PC-3 (cell line): ENCODE measurements at regions of chr5 and their contacts with region 1.

Region 1: GRCh38 chr5:129904102-129904666 is at the start of gene CHSY3:
- DNase-seq: peak; percentile 54
- ATAC-seq: peak; percentile 84
- H3K4me3 ChIP-seq: peak within 1 kb of the TSS; percentile 69
- H3K27ac ChIP-seq: no peak within 1 kb of the TSS
- H3K4me1 ChIP-seq: no peaks in the 10 kb centered on the region
- H3K27me3 ChIP-seq: peaks cover 13% of the 10 kb centered on the region
- CTCF ChIP-seq: no peak
- total RNA-seq, gene CHSY3: 1.7 and 1.8 TPM in 2 replicates

Region 2: GRCh38 chr5:129963359-129963758 is 59.2 kb after region 1 on chr5:
- CTCF ChIA-PET with region 1: interaction called, 3 read pairs
- POLR2A ChIA-PET with region 1: no interaction called
- intact Hi-C with region 1: loop called (anchors 10 kb)
- DNase-seq: peak; percentile 60
- ATAC-seq: peak; percentile 94
- H3K4me3 ChIP-seq: no peak overlapping the region
- H3K27ac ChIP-seq: peak overlapping the region; percentile 66
- H3K4me1 ChIP-seq: peaks cover 9% of the 10 kb centered on the region; the same call in 1 of the 2 replicates
- H3K27me3 ChIP-seq: no peaks in the 10 kb centered on the region
- CTCF ChIP-seq: no peak

Region 3: DNA sequence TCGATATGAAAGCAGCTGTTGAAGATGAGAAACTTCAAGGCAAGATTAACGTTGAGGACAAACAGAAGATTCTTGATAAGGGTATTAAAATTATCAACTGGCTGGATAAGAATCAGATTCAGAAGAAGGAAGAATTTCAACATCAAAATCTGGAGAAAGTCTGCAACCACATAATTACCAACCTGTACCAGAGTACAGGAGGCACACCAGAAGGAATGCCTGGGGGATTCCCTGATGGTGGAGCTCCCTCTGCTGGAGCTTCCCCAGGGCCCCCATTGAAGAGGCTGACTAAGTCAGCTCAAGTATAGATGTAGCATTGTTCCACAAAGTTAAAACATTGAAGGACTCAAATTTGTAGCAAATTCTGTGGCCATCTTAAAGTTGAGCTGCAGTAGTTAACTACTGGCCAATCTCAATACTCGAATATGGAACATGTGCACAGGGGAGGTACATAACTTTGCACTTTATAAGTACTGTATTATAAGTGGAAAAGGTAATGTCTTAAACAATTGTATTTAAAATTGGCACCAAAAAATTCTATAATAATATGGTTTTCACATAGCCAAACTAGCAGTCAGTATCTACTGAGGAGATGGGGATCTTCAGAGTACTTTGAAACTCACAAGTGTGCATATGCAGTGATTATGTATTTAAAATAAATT is 237.6 kb after region 1 on chr5:
- CTCF ChIA-PET with region 1: interaction called, 3 read pairs
- POLR2A ChIA-PET with region 1: no interaction called
- intact Hi-C with region 1: loop called (anchors 1 kb)
- DNase-seq: peak; percentile 55
- ATAC-seq: peak; percentile 87
- H3K4me3 ChIP-seq: no peak overlapping the region
- H3K27ac ChIP-seq: no peak overlapping the region
- H3K4me1 ChIP-seq: peaks cover 6% of the 10 kb centered on the region; the same call in 1 of the 2 replicates
- H3K27me3 ChIP-seq: no peaks in the 10 kb centered on the region
- CTCF ChIP-seq: peak; percentile 73

Region 4: DNA sequence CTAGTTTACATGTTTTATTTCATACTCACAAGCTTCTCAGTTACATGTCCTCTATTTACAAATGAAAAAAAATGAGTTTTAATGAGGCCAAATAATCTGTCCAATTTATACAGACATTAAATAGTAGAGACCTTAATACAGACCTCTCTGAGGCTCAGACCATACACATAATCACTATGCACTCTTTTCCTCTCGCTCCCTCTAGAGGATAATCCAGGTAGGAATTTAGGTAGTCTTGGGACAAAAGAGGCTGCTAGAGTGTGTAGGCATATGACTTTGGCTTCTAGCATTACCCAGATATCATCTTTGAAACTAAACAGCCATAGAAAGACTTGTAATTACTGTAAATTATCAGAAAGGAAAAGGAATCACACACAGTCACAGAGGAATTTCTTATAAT is 816.2 kb after region 1 on chr5:
- CTCF ChIA-PET with region 1: no interaction called
- POLR2A ChIA-PET with region 1: no interaction called
- intact Hi-C with region 1: loop called (anchors 5 kb)
- DNase-seq: peak; percentile 85
- ATAC-seq: peak; percentile 95
- H3K4me3 ChIP-seq: no peak overlapping the region
- H3K27ac ChIP-seq: peak overlapping the region; percentile 11
- H3K4me1 ChIP-seq: 0 out of 2 replicates have a peak, but pooled peaks cover 9% of the 10 kb centered on the region
- H3K27me3 ChIP-seq: no peaks in the 10 kb centered on the region
- CTCF ChIP-seq: peak; percentile 81

Region 5: GRCh38 chr5:131068893-131069643 is 1164.9 kb after region 1 on chr5:
- CTCF ChIA-PET with region 1: no interaction called
- POLR2A ChIA-PET with region 1: no interaction called
- intact Hi-C with region 1: loop called (anchors 5 kb)
- DNase-seq: no peak
- ATAC-seq: no peak
- H3K4me3 ChIP-seq: no peak overlapping the region
- H3K27ac ChIP-seq: no peak overlapping the region
- H3K4me1 ChIP-seq: no peaks in the 10 kb centered on the region
- H3K27me3 ChIP-seq: no peaks in the 10 kb centered on the region
- CTCF ChIP-seq: 0 out of 2 replicates have a peak, but pooled peaks have one; percentile 8

Region 6: GRCh38 chr5:131417240-131417869 is 1513.2 kb after region 1 on chr5:
- CTCF ChIA-PET with region 1: no interaction called
- POLR2A ChIA-PET with region 1: no interaction called
- intact Hi-C with region 1: loop called (anchors 2 kb)
- DNase-seq: peak; percentile 73
- ATAC-seq: peak; percentile 40
- H3K4me3 ChIP-seq: no peak overlapping the region
- H3K27ac ChIP-seq: no peak overlapping the region
- H3K4me1 ChIP-seq: no peaks in the 10 kb centered on the region
- H3K27me3 ChIP-seq: no peaks in the 10 kb centered on the region
- CTCF ChIP-seq: peak; percentile 81